Activated naive CD4-positive, alpha-beta T cell treated with anti-CD3 and anti-CD28 coated beads for 36 hours (primary cell): ENCODE measurements at regions of chr2 and their contacts with region 1.

Region 1: GRCh38 chr2:179340668-179341067 is 76.0 kb upstream of the SESTD1 start:
- DNase-seq: peak; percentile 10
- H3K4me3 Mint-ChIP-seq: no peak overlapping the region
- H3K27ac Mint-ChIP-seq: no peak overlapping the region
- H3K4me1 Mint-ChIP-seq: no peaks in the 10 kb centered on the region
- H3K27me3 Mint-ChIP-seq: no peaks in the 10 kb centered on the region

Region 2: GRCh38 chr2:178761759-178762371 is 578.8 kb before region 1 on chr2:
- CTCF ChIA-PET with region 1: no interaction called
- intact Hi-C with region 1: loop called (anchors 2 kb)
- DNase-seq: peak; percentile 51
- H3K4me3 Mint-ChIP-seq: no peak overlapping the region
- H3K27ac Mint-ChIP-seq: no peak overlapping the region
- H3K4me1 Mint-ChIP-seq: no peaks in the 10 kb centered on the region
- H3K27me3 Mint-ChIP-seq: no peaks in the 10 kb centered on the region

Region 3: GRCh38 chr2:178891265-178891958 is 449.3 kb before region 1 on chr2:
- CTCF ChIA-PET with region 1: no interaction called
- intact Hi-C with region 1: loop called (anchors 2 kb)
- DNase-seq: peak; percentile 82
- H3K4me3 Mint-ChIP-seq: no peak overlapping the region
- H3K27ac Mint-ChIP-seq: no peak overlapping the region
- H3K4me1 Mint-ChIP-seq: peaks cover 9% of the 10 kb centered on the region
- H3K27me3 Mint-ChIP-seq: no peaks in the 10 kb centered on the region

Region 4: DNA sequence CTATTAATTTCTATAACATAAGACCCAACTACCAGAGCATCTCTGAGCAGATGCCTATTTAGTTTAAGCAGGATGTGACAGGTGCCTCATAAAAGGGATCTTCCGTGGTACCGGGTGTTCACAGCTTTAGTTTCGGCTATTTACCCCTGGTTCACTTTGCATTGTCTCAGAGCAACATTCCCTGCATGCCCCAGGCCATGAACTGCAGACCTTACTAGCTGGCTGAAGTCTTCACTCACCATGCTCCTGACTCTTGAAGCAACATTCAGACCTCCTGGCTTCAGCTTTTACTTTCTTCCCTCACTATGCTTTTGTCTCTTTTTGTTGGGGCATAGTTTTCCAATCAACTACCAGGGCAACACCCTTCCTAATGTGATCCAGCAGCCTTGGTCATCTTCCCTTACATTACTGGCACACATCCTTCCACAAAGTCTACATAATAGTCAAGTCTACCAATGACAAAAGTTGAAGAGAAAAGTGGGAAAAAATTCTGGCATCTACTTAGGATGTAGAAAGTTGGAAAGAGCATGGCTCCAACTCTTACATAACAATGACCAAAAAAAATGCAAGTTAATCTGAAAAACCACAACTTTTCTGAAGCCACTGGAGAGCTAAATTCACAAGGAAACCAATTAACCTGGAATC is 175.2 kb before region 1 on chr2:
- CTCF ChIA-PET with region 1: no interaction called
- intact Hi-C with region 1: no loop called
- DNase-seq: no peak
- H3K4me3 Mint-ChIP-seq: no peak overlapping the region
- H3K27ac Mint-ChIP-seq: no peak overlapping the region
- H3K4me1 Mint-ChIP-seq: no peaks in the 10 kb centered on the region
- H3K27me3 Mint-ChIP-seq: no peaks in the 10 kb centered on the region

Region 5: DNA sequence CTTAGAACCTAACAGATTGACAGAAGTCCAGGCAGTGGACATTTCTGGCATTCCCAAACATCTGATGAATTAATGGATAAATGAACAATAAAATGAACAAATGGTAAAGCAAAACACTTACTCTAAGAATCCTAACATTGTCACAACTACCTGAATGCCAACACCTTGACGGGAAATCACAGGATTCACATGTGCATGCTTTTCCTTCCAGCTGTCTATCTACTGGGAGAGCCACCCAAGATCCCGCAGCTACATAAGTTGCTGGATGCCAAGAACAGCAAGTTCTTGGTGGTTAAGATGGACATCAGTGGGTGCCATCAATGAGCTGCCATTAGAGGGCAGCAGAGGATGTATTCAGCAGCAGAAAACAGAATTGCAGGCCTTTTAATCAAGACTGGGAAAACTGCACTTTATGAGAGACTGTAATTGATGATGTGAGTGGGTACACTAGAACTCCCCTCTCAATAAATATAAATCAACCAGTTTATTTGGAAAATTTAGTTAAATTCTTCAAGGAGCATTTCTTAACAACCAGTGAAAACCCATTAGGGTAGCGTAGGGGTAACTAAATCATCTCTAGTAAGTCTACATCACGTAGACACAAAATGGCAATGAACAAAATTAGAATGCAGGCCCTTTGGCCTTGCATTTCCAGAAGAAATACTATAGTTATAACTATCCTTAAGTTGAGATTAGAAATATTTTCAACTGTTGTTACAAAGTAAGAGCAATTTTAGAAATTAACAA is 121.6 kb before region 1 on chr2:
- CTCF ChIA-PET with region 1: interaction called, 3 read pairs
- intact Hi-C with region 1: loop called (anchors 1 kb)
- DNase-seq: peak; percentile 70
- H3K4me3 Mint-ChIP-seq: no peak overlapping the region
- H3K27ac Mint-ChIP-seq: no peak overlapping the region
- H3K4me1 Mint-ChIP-seq: no peaks in the 10 kb centered on the region
- H3K27me3 Mint-ChIP-seq: no peaks in the 10 kb centered on the region

Region 6: GRCh38 chr2:179239195-179239594 is 101.5 kb before region 1 on chr2:
- CTCF ChIA-PET with region 1: no interaction called
- intact Hi-C with region 1: loop called (anchors 5 kb)
- DNase-seq: no peak
- H3K4me3 Mint-ChIP-seq: no peak overlapping the region
- H3K27ac Mint-ChIP-seq: no peak overlapping the region
- H3K4me1 Mint-ChIP-seq: peaks cover 27% of the 10 kb centered on the region
- H3K27me3 Mint-ChIP-seq: peaks cover 2% of the 10 kb centered on the region